ENCODE measurements at regions of chr1 and their contacts with region 1.

Region 1: DNA sequence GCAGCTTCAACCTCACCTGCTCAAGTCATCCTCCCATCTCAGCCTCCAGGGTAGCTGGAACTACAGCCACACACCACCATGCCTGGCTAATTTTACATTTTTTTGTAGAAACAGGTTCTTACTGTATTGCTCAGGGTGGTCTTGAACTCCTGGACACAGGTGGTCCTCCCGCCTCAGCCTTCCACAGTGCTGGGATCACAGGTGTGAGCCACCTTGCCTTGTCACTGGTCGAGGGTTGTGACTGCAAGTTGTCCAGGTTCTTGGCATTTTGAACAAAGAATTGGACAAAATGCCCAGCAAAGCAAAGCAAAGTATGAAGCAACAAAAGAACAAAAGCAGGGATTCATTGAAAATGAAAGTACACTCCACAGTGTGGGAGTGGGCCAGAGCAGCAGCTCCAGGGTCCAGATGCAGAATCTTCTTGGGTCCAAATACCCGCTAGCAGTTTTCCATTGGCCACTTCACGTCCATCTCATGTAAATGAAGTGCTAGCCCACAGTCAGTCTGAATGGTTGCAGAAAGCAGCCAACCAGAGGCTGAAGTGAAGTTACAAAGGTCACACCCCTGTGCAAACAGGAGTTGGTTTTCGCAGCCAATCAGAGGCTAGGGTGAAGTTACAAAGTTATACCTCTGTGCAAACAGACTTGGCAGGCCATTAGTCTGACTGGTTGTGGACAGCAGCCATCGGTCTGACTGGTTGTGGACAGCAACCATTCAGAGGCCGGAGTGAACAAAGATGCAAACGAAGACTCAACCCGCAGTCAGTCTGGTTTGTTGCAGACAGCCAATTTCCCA is 109.5 kb upstream of the KIF26B start:
- H3K4me3 ChIP-seq: no peak overlapping the region
- H3K27ac ChIP-seq: no peak overlapping the region
- H3K4me1 ChIP-seq: 0 out of 2 replicates have a peak, but pooled peaks cover 2% of the 10 kb centered on the region
- CTCF ChIP-seq: no peak

Region 2: GRCh38 chr1:244599937-244600350 is 445.3 kb before region 1 on chr1:
- CTCF ChIA-PET with region 1: interaction called, 14 read pairs
- POLR2A ChIA-PET with region 1: no interaction called
- H3K4me3 ChIP-seq: peak overlapping the region; percentile 16; the same call in 1 of the 2 replicates
- H3K27ac ChIP-seq: peak overlapping the region; percentile 1; the same call in 1 of the 2 replicates
- H3K4me1 ChIP-seq: no peaks in the 10 kb centered on the region
- CTCF ChIP-seq: no peak

Region 3: DNA sequence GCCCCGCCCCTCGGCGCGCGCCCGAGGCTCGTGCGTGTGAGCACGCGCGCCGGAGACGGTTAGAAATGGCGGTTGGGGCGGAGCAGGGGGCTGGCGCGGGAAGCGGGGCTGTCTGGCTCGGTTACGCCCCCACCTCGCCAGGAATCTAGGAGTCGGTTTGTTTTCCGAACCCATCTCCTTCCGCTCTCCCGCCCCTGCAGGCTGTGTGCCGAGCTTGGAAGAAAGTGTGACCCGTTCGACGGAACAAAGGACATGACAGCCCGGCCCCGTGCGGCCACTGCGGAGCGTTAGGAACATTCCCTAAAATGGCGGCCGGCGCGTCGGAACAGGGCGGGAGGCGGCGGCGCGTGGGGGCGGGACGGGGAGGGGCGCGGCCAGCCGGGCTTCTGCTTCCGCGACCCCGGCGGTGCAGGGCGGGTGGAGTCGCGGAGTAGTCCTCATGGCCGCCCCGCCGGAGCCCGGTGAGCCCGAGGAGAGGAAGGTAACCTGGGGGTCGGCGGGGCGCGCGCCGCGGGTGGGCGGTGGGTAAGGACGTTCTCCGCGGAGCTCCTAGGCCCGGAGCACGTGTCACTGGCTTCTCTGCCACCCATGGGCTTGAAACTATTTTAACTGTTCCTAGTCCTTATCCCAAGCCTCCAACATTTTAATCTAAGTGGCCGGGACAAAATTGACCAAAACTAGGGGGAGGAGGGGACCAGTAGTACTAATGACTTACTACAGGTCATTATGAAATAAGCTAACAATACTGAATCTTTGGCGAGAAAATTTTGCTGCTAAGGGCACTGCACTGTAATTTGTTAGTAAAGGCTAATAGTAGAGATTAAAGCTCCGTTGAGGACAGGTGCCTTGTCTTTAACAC is 209.8 kb before region 1 on chr1 and contains the start of gene COX20:
- CTCF ChIA-PET with region 1: interaction called, 18 read pairs
- POLR2A ChIA-PET with region 1: interaction called, 12 read pairs
- H3K4me3 ChIP-seq: peak within 1 kb of the TSS; percentile 91
- H3K27ac ChIP-seq: peak within 1 kb of the TSS; percentile 99
- H3K4me1 ChIP-seq: peaks cover 10% of the 10 kb centered on the region; the same call in 1 of the 2 replicates
- CTCF ChIP-seq: peak; percentile 89; the same call in 1 of the 2 replicates

Region 4: DNA sequence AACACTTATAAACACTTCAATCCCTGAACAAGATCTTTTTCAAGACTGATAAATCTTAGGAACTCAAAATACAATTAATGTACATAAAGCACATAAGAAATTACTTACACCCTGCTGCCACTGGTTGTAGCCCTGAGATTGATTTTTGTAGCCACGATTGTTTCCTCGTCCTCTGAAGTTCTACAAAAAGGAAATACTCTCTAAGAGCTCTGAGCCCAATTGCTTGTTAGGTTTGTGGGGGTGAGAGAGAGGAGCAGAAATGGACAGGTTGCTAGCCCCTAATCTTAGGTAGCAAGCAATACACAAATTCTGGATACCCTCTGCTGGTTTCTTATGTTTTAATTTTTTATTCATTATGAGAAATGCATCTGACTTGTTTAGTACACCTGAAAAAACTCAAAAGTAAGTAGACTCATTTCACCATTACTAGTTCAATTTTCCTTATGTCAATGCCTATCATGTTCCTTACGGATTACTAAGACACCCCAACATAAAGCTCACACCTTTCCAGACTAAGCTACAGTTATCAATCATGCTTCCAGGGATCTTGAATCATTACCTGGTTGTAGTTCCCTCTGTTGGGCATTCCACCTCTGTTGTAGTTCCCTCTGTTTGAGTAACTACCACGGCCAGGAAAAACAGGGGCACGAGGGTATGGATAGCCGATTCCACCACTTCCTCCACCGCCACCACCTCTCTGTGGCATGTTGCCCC is 190.3 kb before region 1 on chr1:
- CTCF ChIA-PET with region 1: interaction called, 28 read pairs
- POLR2A ChIA-PET with region 1: interaction called, 5 read pairs
- H3K4me3 ChIP-seq: no peak overlapping the region
- H3K27ac ChIP-seq: no peak overlapping the region
- H3K4me1 ChIP-seq: peaks cover 4% of the 10 kb centered on the region; the same call in 1 of the 2 replicates
- CTCF ChIP-seq: no peak

Region 5: DNA sequence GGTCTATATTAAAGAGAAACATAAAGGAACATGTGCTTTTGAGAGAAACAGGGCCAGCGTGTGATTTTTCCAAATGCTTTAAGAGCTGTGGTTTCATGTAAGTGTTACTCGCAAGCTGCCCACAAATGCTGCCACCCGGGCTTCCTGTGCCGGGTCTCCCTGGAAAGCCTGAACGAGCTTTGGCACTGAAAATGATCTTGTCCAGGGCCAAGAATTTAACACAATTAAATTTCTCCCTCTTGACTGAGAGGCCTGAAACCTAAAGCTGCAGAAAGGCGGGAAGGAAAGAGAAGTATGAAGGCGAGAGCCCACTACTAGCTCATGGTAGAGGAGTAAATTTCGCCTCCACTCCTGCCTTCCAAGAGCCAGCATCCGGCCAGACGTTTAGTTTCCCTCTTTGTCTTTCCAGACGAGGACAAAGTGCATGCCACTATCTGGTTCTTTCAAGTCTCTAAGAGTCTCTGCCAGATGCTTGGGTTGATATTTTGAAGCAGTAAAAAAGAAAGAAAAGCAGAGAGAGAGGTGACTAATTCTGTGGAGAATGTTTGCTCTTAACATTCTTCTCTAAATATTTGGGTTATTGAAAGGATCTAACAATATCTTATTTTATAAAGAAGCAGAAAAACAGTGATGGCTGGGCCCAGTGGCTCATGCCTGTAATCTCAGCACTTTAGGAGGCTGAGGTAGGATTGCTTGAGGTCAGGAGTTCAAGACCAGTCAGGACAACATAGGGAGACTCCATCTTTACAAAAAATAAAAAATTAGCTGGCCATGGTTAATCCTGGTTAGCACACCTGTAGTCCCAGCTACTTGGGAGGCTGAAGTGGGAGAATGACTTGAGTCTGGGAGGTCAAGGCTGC is 80.9 kb before region 1 on chr1:
- CTCF ChIA-PET with region 1: interaction called, 13 read pairs
- POLR2A ChIA-PET with region 1: interaction called, 3 read pairs
- H3K4me3 ChIP-seq: no peak overlapping the region
- H3K27ac ChIP-seq: no peak overlapping the region
- H3K4me1 ChIP-seq: no peaks in the 10 kb centered on the region
- CTCF ChIP-seq: no peak

Region 6: DNA sequence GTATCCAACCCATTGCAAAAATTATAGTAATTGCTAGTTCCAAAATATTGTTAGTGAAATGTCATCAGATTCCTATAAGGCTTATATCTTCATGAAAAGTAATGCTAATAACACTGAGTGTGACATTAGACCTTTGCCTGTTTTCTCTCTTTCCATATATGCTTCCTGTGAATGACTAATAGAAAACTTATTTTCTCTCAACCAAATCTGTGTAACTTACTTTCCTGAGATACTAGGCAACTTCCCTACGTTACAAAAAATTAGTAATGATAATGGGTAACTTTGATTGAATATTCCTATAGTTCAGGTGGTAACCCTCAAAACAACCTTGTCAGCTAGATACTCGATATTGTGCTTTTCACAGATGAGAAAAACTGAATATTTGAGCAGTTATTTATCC is 56.8 kb before region 1 on chr1:
- CTCF ChIA-PET with region 1: interaction called, 10 read pairs
- POLR2A ChIA-PET with region 1: no interaction called
- H3K4me3 ChIP-seq: no peak overlapping the region
- H3K27ac ChIP-seq: no peak overlapping the region
- H3K4me1 ChIP-seq: no peaks in the 10 kb centered on the region
- CTCF ChIP-seq: no peak

Region 7: GRCh38 chr1:245031041-245031440 is 14.2 kb before region 1 on chr1:
- CTCF ChIA-PET with region 1: interaction called, 19 read pairs
- POLR2A ChIA-PET with region 1: interaction called, 4 read pairs
- H3K4me3 ChIP-seq: no peak overlapping the region
- H3K27ac ChIP-seq: no peak overlapping the region
- H3K4me1 ChIP-seq: no peaks in the 10 kb centered on the region
- CTCF ChIP-seq: no peak

Measured in HEK293 (cell line).